Heart left ventricle (tissue), 16 donors: ENCODE measurements at regions of chr2 and their contacts with region 1.

Region 1: DNA sequence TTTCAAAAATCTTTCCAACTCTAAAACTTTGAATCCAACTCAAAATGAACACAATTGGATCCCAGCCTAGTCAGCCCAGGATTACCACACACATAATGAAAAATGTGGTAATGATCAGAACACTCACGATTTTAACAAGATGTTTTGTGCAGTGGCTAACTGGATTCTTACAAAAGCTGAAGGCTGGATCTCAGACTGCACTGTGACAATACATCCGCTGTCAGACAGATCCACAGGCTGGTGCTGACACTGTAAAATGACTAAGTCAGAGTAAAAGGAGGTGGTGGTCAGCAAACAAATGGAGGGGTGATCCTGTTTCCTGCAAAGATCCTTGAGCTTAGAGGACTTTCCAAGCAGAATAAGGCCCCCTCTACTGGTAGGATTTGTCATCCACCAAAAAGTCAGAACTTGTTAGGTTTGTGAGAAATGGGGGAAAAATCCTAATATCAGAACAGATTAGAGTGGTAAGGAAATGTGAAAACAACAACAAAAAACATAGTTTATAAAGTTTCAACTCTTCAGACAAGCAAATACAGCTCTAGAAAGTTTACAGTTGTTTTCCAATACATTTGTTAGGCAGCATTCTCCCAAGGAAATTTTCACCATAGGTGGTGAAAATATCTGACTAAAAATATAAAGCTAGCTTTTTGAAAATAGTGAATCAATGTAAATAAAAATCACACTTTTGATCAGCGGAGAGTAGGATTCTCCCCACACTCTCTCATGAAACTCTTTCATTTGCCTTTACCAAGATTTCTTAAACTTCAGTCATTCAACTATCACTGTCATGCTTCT is 211.9 kb downstream of the AGPS start:
- DNase-seq: peak in 1 of 5 donors; percentile 13
- ATAC-seq: peak in 3 of 4 donors; percentile 39 to 78 (median 52)
- H3K4me3 ChIP-seq: peak overlapping the region in 1 of 12 donors; percentile 9
- H3K27ac ChIP-seq: peak overlapping the region in 5 of 12 donors; percentile 1 to 22 (median 10)
- H3K4me1 ChIP-seq: peaks cover 0 to 7% (median under 1%) of the 10 kb centered on the region in 12 donors
- H3K27me3 ChIP-seq: no peaks in the 10 kb centered on the region
- CTCF ChIP-seq: peak; percentile 47 to 76 (median 64)
- POLR2A ChIP-seq: no peak

Region 2: DNA sequence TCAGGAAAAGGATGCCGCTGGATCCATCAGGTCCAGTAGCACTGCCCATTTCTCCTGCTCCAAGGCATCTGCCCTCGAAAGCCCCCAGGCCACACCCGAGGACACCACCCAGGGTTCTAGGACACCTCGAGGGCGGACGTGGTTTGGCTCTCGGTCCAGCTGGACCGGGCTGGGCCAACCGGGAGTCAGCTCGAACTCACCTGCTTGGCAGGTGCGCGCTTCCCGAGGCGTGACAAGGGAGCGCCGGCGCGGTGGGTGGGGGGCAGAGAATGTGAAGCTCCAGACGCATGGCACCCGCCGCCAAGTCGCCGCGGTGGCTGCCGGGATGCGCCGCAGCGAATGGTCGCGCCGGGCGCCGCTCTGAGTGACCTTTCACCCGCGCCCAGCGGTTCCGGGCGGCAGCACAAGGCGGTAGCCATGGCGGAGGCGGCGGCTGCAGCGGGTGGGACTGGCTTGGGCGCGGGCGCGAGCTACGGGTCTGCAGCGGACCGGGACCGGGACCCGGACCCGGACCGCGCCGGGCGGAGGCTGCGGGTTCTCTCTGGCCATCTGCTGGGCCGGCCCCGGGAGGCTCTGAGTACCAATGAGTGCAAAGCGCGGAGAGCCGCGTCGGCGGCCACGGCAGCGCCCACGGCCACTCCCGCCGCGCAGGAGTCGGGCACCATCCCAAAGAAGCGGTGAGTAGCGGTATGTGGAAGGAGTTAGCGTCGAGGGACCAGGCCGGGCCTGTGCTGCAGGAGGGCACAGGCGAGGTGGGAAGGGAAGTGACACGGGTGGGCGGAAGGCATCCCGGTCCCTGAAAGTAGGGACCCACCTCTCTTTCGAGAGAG is 211.9 kb before region 1 on chr2 and contains the start of gene AGPS:
- intact Hi-C with region 1: loop called in 1 of 10 experiments (anchors 10 kb)
- DNase-seq: peak; percentile 79 to 91 (median 87)
- ATAC-seq: peak; percentile 89 to 98 (median 95)
- H3K4me3 ChIP-seq: peak within 1 kb of the TSS; percentile 48 to 96 (median 90)
- H3K27ac ChIP-seq: peak within 1 kb of the TSS; percentile 12 to 86 (median 80)
- H3K4me1 ChIP-seq: peaks cover 0 to 57% (median 30%) of the 10 kb centered on the region in 12 donors
- H3K27me3 ChIP-seq: no peaks in the 10 kb centered on the region
- CTCF ChIP-seq: peak in 6 of 12 donors; percentile 16 to 37 (median 20)
- POLR2A ChIP-seq: peak in 1 of 2 donors; percentile 63
- total RNA-seq, gene AGPS: 19.7 to 36.6 (median 26.2) TPM

Region 3: DNA sequence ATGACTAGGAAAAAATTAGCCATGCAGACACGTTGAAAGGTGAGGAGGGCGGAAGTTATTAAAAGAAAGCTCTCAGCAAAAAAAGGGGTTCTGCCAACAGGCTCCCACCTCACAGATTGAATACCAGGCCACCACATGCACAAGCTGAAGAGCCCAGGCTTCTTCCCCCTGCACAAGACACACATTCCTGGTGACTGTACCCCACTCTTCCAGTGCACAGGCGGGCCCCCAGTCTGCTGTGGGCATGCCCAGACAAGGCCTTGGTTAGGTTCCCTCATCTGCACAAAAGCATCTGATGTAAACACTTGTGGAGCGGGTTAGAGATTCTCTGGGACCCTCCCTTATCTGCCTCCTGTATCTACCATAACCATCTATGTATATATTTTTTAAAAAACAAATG is 130.2 kb before region 1 on chr2:
- intact Hi-C with region 1: no loop called
- DNase-seq: no peak
- ATAC-seq: no peak
- H3K4me3 ChIP-seq: no peak overlapping the region
- H3K27ac ChIP-seq: no peak overlapping the region
- H3K4me1 ChIP-seq: peaks cover 0 to 6% (median 0%) of the 10 kb centered on the region in 12 donors
- H3K27me3 ChIP-seq: no peaks in the 10 kb centered on the region
- CTCF ChIP-seq: no peak
- POLR2A ChIP-seq: no peak

Region 4: DNA sequence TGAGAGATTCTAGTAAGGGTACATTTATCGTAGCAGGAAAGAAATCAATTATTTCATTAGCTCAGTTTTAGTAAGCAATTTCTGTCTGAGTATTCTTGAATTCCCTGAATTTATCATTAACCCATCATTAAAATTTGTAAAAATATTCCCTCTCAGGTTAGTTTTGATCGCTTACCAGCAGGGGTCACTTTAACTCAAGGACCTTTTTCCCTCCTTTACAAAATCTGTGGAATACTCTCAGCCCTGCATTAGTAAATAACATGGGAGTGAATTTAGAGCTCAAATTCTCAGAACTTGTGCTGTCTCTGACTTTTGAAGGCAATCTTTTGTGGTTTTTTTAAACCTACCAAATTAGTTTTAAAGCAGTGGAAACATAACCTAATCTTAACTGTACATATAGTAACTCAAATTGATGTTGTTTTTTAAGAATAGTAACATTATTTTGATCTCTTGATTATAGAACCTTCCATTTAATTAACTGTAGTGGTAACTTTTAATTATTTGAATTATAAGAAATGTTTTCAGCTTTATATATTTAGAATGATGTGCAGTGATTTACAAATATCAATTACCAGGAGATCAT is 114.7 kb before region 1 on chr2:
- intact Hi-C with region 1: loop called in 7 of 10 experiments (anchors 2 to 10 kb)
- DNase-seq: no peak
- ATAC-seq: no peak
- H3K4me3 ChIP-seq: no peak overlapping the region
- H3K27ac ChIP-seq: no peak overlapping the region
- H3K4me1 ChIP-seq: peaks cover 0 to 3% (median 0%) of the 10 kb centered on the region in 12 donors
- H3K27me3 ChIP-seq: no peaks in the 10 kb centered on the region
- CTCF ChIP-seq: peak; percentile 33 to 71 (median 60)
- POLR2A ChIP-seq: no peak

Region 5: GRCh38 chr2:177717831-177718618 is 113.6 kb after region 1 on chr2:
- intact Hi-C with region 1: loop called in 5 of 10 experiments (anchors 5 to 10 kb)
- DNase-seq: no peak
- ATAC-seq: no peak
- H3K4me3 ChIP-seq: no peak overlapping the region
- H3K27ac ChIP-seq: no peak overlapping the region
- H3K4me1 ChIP-seq: peaks cover 0 to 3% (median 0%) of the 10 kb centered on the region in 12 donors
- H3K27me3 ChIP-seq: peaks cover 0 to under 1% (median 0%) of the 10 kb centered on the region in 9 donors
- CTCF ChIP-seq: peak in 7 of 12 donors; percentile 13 to 34 (median 28)
- POLR2A ChIP-seq: no peak

Region 6: GRCh38 chr2:177724398-177725287 is 120.2 kb after region 1 on chr2:
- intact Hi-C with region 1: loop called in 5 of 10 experiments (anchors 5 to 10 kb)
- DNase-seq: peak in 3 of 5 donors; percentile 36 to 53 (median 40)
- ATAC-seq: peak; percentile 64 to 83 (median 74)
- H3K4me3 ChIP-seq: no peak overlapping the region
- H3K27ac ChIP-seq: peak overlapping the region in 2 of 12 donors; percentile 3 to 24
- H3K4me1 ChIP-seq: peaks cover 0 to 9% (median 0%) of the 10 kb centered on the region in 12 donors
- H3K27me3 ChIP-seq: peaks cover 0 to 5% (median 0%) of the 10 kb centered on the region in 9 donors
- CTCF ChIP-seq: peak; percentile 80 to 95 (median 86)
- POLR2A ChIP-seq: no peak

Region 7: DNA sequence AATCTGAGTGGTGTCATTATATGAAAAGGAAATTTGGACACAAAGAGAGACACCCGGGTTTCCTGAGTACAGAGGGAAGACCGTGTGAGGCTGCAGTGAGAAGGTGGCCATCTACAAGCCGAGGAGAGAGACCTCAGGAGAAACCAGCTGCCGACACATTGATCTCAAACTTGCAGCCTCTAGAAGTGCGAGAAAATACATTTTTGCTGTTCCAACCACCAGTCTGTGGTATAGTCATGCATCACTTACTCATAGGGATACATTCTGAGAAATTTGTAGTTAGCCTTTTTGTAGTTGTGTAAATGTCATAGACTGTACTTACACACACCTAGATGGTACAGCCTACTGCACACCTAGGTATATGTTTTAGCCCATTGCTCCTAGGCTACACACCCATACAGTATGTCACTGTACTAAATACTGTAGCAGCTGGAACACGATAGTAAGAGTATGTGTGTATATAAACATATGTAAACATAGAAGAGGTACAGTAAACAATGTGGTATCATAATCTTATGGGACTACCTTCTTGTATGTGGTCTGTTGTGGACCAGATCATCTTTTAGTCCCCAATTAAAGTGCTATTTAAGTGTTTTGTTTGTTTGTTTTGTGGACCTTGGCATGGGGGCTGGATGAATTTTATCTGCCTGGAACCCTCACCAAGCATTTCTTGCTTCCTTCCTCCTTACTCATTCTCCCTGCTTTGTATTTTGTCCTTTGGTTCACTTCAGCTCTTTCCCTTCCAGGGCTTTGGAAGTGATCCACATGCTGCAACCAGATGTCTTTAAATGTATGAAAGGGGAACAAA is 1698.5 kb after region 1 on chr2:
- intact Hi-C with region 1: no loop called
- DNase-seq: no peak
- ATAC-seq: no peak
- H3K4me3 ChIP-seq: no peak overlapping the region
- H3K27ac ChIP-seq: no peak overlapping the region
- H3K4me1 ChIP-seq: no peaks in the 10 kb centered on the region
- H3K27me3 ChIP-seq: no peaks in the 10 kb centered on the region
- CTCF ChIP-seq: no peak
- POLR2A ChIP-seq: no peak